Posterior cingulate gyrus (tissue), 11 donors: ENCODE measurements at regions of chr3 and their contacts with region 1.

Region 1: DNA sequence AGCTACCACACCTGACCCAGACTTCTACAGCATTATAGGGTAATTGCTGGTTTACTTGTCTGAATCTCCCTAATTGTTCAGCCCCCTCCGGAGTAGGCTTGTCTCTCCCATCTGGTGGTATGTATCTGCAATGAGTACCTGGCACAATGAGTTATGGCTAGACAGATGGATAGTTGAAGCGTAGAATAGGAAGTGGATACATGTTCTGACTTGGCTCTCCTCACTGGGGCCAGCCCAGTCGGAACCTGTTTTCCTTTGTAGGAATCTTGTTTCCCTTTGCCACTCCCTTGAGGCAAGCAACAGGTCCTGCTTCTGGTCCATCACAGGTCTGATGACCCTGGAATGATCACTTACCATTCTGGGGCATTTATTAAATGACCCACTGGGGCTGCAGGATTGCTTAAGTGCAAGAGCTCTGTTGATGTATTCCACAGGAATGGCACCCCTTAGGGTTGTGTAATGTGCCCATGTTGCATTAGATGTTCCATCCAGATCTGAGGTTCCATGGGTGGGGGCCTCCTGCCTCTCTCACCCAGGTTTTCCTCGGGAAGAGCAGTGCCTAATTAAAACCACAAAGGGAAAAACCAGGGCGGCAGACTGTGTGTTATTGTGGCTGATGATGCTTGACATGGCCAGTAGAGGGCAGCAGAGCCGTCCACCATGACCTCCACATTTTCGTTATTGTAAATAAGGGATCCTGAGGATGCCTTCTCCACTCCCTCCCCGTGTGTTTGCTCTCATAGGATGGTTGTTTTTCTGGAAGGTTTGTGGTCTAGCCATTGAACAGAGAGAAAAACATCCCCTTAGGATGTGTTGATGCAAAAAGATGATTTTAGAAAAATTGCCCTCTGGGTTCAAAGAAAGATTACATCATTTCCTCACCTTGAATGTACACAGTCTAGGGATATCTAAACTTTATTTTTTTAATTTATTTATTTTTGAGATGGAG is 58.0 kb downstream of the CMTM8 start:
- DNase-seq: peak in 8 of 10 donors; percentile 37 to 93 (median 58)

Region 2: DNA sequence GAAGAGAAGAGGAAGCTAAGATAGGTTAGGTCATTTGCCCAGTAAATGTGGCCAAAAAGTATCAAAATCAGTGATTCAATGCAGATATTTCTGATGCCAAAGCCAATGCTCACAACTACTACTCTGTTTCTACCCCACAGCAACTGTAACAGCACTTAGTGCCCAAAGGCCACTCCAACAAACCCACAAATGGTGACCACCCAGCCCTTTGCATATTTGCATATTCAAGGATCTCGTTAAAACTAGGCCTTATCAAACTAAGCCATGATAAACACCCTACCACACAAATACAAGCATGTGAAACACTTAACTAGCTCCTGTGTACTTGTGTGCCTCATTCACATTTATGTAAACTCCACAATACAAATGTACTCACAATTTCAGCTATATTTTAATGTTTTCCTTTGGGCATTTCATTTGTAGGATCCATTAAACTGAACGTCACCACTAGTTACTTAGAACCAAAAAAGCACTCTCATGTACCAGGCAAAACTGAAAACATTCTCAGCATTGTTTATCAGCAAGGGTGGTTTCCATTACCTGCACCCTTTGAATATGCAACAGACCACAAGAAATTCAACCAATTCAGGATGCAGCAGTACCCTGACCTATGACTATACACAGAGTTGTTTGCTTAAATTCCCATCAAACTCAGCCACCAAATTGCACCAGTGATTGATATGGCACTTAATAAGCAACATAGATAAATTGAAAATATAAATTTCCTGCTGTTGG is 875.0 kb before region 1 on chr3:
- intact Hi-C with region 1: no loop called
- DNase-seq: no peak

Region 3: DNA sequence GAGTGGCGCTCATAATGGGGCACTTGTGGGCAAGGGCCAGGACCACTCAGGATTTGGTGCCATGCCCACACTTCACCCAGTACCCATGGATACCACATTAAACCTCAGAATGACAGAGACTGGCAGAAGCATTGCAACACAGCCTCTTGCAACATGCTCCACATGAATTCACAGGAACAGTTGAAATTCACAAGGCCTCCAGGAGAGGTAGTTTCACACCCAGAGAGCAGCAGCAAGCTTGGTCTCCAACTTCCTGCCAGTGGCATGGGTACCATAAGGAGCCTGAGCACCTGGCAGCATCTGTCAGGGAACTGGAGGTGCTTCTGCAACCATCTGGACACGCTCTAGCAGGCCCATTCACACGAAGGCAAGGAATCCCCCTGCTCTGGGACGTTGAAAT is 416.5 kb before region 1 on chr3:
- intact Hi-C with region 1: no loop called
- DNase-seq: no peak

Region 4: DNA sequence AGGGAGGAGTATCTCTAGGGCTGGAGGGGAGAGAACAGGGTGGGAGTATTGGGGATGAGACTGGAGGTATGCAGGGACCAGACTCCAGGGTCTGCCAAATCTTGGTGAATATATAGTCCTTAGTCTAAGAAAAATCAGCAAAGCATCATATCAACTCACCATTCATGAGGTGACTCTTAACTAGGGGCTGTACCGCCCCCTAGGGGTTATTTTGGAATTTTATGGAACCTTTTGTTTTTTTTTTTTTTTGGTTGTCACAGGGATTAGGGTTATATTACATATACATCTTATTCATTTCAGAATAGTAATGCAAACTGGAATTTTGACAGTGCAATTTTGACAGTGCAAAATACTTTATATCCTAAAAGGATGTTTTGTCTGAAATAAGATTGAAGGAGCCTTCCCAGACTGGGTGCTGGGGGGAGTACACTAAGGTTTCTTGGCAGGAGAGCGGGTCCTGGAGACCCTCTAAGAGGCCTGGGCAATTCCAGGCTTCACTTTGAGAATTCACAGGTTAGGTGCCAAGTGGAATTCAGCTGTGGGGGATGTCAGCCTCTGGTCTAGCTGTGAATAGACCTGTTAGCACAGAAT is 102.6 kb after region 1 on chr3:
- intact Hi-C with region 1: loop called (anchors 5 kb)
- DNase-seq: no peak

Region 5: DNA sequence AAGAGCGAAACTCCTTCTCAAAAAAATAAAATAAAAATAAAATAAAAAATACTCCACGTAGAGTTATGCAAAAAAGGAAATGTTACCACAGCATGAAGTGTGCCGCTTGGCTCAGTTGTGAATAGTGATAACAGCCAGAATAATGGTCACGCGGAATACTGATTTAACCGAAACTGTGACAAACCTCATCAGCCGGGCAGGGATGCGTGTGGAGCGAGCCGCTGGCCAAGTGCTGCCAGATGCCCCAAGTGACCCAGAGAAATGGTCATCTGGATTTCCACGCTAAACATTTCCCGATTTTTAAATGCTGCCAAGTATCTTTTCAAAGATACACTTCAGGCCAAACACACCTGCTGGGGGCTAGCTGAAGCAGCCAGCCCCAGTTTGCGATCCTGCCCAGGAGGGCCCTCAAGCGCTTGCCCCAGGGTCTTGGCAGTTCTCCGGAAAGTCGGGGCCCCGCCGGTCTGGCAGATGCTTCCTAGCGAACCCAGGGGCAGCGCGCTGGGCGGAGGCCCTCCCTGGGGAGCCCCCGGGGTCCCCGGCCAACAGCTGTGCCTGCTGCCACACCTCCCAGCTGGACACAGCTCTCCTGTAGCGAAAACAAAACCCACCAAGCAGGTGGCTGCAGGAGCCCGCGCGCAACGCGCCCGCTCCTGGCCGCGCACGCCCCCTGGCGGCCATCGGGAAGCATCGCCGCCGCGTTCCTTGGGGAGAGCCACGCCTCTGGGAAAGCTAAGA is 171.0 kb after region 1 on chr3:
- intact Hi-C with region 1: loop called (anchors 5 kb)
- DNase-seq: peak; percentile 37 to 95 (median 74)

Region 6: GRCh38 chr3:32522682-32523081 is 226.2 kb after region 1 on chr3:
- intact Hi-C with region 1: no loop called
- DNase-seq: no peak